ENCODE measurements at regions of chr15 and their contacts with region 1.

Region 1: GRCh38 chr15:68304589-68305337 is 27.2 kb downstream of the FEM1B start:
- DNase-seq: no peak

Region 2: GRCh38 chr15:68114356-68114755 is 190.4 kb before region 1 on chr15:
- intact Hi-C with region 1: no loop called
- DNase-seq: no peak

Region 3: DNA sequence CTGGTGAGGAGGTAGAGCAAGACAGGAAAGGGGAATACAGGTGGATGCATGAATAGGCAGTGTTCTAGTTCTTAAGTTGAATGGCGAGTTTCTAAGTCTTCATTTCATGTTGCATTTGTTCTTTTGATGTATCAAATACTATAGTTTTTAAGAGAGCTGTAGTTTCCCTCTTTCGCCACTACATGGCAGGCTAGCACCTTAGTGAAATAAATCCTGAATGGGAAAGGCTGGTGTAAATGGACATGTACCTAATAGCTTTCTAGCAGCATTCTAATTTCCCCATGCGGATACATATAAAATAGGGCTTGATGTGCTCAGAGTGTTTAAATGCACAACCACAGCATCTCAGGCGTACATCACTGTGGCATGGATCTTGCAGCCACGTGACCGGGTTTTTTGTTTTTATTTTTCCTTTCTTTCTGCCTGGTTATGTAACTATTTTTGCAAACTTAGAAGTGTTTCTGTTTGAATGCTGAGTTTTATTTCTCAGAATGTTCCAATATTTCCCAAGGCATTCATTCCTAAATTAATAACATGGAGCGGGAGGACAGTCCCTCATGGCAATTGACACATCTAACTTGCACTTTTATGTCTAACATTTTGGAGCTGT is 51.7 kb before region 1 on chr15:
- intact Hi-C with region 1: loop called (anchors 2 kb)
- DNase-seq: no peak

Region 4: GRCh38 chr15:68365140-68365745 is 60.5 kb after region 1 on chr15:
- intact Hi-C with region 1: loop called (anchors 5 kb)
- DNase-seq: no peak

Region 5: DNA sequence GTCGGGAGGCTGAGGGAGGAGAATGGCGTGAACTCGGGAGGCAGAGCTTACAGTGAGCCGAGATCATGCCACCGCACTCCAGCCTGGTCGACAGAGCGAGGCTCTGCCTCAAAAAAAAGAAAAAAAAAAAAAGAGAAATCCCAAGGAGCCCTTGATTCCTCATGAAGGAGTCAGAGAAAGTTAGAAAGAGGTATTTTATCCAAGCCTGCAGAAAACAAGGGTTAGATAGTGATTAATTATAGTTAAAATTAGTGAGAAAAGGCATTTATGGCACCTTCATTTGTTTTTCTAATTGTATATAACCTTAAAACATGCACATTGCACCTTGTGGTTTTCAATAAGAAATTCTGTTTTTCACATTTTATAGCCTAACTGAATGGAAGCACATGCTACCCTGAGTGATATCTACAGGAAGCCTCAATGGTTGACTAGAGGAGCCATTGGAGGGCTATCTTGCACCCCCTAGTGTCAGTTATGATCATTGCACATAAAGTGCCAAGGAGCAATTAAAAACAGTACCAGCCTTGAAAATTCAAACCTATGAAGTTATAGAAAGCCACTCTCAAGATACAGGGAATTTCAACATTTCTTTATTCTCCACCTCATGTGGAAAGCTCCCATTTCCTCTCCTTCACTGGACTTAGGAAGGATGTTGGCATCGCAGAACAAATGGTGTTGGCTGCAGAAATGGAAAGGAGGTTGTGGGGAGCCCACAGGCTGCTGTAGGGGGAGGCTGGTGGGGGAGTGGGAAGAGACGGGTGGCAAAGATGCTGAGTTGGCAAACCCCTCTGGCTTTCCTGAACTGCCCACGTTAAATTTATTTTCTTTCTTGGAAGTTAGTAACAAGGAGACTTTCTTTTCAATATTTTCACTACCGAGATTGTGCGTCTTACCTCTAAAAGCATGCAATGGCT is 78.7 kb after region 1 on chr15:
- intact Hi-C with region 1: loop called (anchors 2 kb)
- DNase-seq: peak; percentile 27

Region 6: DNA sequence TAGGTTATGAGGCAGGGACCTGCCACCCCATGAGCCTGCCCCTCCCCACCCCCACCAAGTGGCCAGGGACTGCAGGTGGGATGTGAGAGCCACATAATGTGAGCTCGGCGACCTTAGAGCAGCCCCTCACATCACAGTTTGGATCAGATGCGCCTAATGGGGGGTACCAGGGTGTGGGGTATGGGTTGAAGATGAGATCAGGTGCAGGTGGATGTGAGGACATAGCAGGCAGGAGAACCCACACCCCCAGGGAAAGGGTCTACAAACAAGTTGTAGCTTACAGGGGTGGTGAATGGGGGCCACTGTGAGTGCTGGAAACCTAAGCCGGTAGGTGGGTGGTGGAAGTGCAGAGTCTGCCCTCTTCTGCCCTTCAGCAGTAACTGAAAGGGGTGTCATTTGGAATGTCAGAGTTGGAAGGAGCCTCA is 368.0 kb after region 1 on chr15:
- intact Hi-C with region 1: loop called (anchors 5 kb)
- DNase-seq: peak; percentile 54

Region 7: GRCh38 chr15:68983961-68984481 is 679.3 kb after region 1 on chr15:
- intact Hi-C with region 1: no loop called
- DNase-seq: no peak

Measured in cardiac septum (tissue), 1 donor.